ENCODE measurements at regions of chr10 and their contacts with region 1.

Region 1: DNA sequence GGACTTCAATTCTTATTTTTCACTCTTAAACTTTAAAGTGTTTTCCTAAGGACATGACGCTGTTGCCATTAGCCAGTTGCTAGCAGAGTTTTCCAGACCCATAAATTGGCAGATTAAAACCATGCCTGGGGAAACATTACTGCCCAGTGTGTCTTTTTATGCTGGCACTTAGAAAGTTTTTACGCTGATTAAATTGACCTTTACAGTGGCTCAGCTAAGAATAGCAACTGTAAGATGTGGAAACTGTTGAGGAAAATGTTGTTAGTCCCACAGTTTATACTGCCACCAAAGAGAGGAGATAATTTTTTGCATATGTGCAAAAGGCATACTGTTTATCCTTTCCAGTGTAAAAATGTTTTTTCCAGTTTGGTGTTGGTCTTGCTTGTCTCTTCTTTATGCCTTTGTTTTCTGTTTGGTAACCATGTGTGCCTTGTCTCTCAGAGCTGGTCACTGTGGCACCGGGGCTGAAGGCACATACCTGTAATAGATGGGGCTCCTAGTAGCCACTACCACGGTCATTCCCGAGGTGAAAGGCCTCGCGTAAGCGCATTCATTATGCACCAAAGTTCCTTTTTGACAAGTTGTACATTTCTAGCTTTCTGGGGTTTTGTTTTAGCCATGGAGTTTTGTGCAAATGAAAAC is 45.3 kb downstream of the CYP17A1 start:
- DNase-seq: no peak
- H3K4me3 ChIP-seq: no peak overlapping the region
- H3K27ac ChIP-seq: peak overlapping the region in 3 of 5 donors; percentile 12 to 57 (median 37)
- H3K4me1 ChIP-seq: peaks cover 27 to 66% of the 10 kb centered on the region in 2 donors
- H3K27me3 ChIP-seq: no peaks in the 10 kb centered on the region
- CTCF ChIP-seq: no peak
- POLR2A ChIP-seq: no peak

Region 2: DNA sequence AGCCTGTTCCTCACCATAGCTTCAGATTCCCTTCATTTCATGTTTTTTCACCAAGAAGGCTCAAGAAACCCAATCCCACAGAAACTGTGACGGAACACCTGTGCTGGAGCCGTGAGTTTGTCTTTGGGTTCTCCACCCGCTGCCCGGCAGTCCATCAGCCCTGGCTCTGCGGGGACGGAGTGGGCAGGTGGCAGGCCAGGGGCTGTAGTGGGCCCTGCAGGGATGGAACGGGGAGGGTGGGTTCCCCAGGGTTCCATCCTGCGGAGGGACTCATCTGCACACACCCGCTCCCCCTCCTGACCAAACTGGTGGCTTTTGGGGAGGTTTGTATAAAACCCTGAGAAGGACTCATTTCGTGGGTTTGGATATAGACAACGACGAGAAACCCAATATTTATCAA is 30.3 kb after region 1 on chr10:
- intact Hi-C with region 1: loop called in 1 of 2 experiments (anchors 5 kb)
- DNase-seq: no peak
- H3K4me3 ChIP-seq: no peak overlapping the region
- H3K27ac ChIP-seq: no peak overlapping the region
- H3K4me1 ChIP-seq: peaks cover 0 to under 1% of the 10 kb centered on the region in 2 donors
- H3K27me3 ChIP-seq: no peaks in the 10 kb centered on the region
- CTCF ChIP-seq: no peak
- POLR2A ChIP-seq: no peak

Region 3: DNA sequence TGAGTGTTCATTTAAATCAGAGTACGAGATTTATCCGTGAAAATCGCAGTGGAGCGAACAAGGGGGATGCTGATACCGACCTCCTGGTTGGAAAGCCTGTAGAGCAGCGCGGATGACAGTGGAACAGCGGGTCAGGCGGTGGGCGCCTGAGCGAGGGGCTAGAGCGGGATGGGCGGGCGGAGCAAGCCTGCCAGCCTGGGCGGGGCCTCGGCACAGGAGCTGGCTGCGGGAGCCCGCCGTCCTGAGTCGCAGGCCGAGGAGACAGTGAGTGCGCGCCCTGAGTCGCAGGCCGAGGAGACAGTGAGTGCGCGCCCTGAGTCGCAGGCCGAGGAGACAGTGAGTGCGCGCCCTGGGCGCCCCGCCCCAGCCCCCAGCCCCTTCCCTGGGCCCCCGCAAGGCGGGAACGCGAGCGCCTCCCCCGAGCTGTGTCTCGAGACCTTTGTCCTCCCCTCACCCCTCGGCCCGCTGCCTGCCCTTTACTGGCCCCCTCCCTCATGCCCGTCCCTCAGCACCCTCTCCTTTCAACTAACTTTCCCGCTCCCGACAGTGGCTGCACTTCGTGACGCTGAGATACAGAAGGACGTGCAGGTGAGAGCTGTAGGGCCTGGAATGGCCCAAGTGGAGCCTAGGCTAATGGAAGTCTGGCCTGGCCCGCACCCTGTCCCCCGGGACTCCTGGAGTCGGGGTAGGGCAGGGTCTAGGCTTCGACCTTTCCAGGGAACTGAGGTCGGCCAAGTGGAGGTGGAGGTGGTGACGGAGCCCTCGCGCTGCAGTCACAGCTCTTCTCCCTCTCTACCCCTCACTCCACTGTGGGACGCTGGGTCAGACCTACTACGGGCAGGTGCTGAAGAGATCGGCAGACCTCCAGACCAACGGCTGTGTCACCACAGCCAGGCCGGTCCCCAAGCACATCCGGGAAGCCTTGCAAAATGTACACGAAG is 77.7 kb after region 1 on chr10 and contains the start of gene AS3MT:
- intact Hi-C with region 1: no loop called
- DNase-seq: peak; percentile 64 to 77 (median 72)
- H3K4me3 ChIP-seq: peak within 1 kb of the TSS in 3 of 4 donors; percentile 34 to 64 (median 41)
- H3K27ac ChIP-seq: peak within 1 kb of the TSS; percentile 63 to 90 (median 77)
- H3K4me1 ChIP-seq: peaks cover 24 to 43% of the 10 kb centered on the region in 2 donors
- H3K27me3 ChIP-seq: no peaks in the 10 kb centered on the region
- CTCF ChIP-seq: no peak
- POLR2A ChIP-seq: peak; percentile 27 to 78
- total RNA-seq, gene AS3MT: 177 to 361 (median 325) TPM

Measured in adrenal gland (tissue), 19 donors.